Right ventricle myocardium inferior (tissue), 1 donor: ENCODE measurements at regions of chr6 and their contacts with region 1.

Region 1: GRCh38 chr6:3162565-3163247 is 5.4 kb upstream of the TUBB2A start:
- DNase-seq: peak; percentile 83
- ATAC-seq: peak; percentile 88

Region 2: DNA sequence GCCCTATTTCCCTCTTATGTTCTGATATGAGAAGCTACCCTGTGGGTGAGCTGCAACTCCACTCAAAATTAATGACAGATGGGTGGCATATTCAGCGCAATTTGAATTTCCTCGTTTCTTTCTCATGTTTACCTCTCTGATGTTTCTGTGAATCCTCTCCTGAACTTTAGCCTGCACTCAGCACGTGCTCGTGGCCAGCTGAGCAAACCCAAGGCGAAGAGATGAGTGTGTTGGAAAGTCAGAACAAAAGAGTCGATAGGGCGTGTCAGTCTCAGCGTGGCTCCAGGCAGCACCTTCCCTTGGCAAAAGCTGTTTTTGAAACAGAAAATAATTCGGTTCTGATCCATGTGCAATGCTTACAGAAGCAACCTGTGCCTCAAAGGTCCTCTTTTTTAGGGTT is 691.2 kb before region 1 on chr6:
- intact Hi-C with region 1: no loop called
- DNase-seq: no peak
- ATAC-seq: no peak

Region 3: DNA sequence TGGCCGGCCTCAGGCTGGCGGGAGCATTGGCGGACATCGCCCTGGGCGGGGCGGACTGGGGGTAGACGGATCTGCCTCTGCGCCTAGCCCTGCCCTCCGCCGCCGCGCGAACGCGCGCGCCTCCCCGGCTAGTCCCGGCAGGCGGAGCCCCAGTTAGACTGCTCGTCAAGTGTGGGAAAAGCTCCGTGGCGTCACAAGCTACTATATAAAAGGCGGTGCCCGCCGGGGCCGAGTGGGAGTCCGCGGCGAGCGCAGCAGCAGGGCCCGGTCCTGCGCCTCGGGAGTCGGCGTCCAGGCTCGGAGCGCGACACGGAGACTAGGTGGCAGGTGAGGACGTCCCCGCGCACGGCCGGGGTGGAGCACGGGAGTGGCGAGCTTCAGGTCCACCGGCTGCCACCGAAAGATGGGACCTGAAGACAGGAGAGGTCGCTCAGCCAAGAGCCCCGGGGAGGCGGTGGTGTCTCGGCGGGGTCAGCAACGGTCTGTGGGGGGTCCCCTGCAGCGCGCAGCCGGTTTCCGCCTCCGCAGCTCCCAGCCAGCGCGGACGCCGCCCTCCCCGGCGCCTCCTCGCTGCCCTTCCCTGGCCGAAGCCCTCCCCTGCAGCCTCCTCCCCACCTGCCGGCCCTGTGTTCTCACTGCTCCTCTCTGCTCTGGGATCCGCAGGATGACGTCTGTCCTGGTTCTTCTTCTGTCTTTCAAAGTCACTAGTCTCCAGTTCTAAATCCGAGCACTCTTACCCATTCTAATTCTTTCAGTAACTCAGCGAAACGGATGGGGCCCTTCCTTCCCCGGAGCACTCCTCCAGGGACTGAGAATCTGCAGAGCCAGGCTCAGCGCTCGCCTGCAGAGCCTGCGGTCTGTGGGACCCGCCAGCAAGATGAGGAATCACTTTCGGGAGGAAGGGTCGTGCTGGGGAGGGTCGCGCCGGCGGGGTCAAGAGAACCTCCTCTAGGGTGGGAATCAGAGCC is 98.7 kb before region 1 on chr6:
- intact Hi-C with region 1: no loop called
- DNase-seq: peak; percentile 98
- ATAC-seq: peak; percentile 95

Region 4: GRCh38 chr6:3231247-3232016 is 68.7 kb after region 1 on chr6:
- intact Hi-C with region 1: loop called (anchors 5 kb)
- DNase-seq: no peak
- ATAC-seq: peak; percentile 74

Region 5: DNA sequence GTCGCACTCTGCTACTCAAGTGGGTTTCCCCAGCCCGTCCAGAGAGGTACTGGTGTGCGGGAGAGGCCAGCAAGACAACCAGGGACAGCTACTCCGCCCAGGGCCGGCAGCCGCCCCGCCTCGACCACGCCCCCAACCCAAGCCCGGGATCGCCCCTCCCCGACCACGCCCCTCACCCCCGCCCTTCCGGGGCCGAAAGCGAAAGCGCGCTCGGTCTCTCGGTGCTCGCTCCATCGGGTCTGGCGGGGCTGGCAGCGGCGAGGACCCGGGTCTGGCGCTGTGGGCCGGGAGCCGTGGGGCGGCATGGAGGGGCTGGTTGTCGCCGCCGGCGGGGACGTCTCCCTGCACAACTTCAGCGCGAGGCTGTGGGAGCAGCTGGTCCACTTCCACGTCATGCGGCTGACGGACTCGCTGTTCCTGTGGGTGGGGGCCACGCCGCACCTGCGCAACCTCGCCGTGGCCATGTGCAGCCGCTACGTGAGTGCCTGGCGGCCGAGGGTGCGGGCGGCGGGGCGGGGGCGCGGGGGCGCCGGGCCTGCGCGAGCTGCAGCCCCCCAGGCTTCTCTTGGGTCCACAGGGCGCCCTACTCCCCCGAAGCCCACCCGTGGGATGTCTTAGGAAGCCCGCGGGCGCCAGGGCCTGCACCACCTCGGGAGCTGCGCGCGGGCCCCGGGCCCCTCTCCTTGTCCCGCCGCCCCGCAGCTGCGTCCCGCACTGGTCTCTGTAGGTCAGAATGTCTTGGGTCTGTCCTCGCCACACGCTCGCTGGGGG is 96.2 kb after region 1 on chr6 and contains the start of gene PSMG4:
- intact Hi-C with region 1: loop called (anchors 5 kb)
- DNase-seq: peak; percentile 98
- ATAC-seq: peak; percentile 99
- total RNA-seq, gene PSMG4: 9.1 TPM